ENCODE measurements at regions of chr16 and their contacts with region 1.

Region 1: GRCh38 chr16:22297114-22297878 is at the start of gene POLR3E:
- DNase-seq: peak; percentile 100
- ATAC-seq: peak; percentile 97
- total RNA-seq, gene POLR3E: 43.5 TPM

Region 2: GRCh38 chr16:22007509-22008214 is 289.6 kb before region 1 on chr16 and contains the start of gene MOSMO:
- intact Hi-C with region 1: loop called (anchors 10 kb)
- DNase-seq: peak; percentile 84
- ATAC-seq: peak; percentile 94
- total RNA-seq, gene MOSMO: 19.7 TPM

Region 3: DNA sequence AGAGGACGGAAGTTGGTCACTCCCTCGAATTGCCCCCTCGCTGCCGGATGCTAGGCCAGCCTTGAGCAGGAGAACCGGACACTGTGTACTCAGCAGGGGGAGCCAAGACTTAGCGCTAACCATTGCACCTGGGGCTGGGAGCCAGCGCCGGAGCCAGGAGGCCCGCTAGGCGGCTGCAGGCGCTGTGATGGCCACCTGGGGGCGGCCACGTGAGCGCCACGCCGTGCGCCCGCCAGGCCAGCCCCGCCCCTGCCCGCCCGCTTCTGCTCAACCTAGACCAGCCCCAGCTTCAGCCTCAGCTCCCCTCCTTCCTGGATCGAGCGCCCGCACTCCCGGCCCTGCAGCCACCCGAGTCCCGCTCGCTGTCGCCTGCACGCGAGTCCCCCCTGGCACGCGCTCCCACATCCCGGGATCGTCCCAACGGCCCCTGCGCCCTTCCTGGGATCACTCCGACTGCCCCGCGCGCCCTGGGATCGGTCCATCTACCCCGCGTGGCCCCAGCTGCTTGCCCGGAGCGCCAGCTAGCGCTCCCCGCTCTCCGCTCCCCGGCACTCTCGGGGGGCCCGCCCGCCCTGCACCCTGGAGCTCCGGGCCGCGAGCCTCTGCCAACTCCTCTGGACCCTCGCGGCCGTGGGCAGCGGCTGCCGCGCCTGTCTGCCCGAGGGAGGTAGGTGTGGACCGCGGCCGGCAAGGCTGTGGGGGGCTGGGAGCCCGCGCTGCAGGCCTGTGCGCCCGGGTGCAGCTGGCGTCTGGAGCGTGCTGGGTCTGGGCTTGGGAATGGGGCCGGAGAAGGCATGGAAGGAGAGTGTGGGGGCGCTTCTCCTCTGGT is 91.1 kb before region 1 on chr16 and contains the start of gene EEF2K:
- intact Hi-C with region 1: loop called (anchors 5 kb)
- DNase-seq: peak; percentile 92
- ATAC-seq: peak; percentile 95
- total RNA-seq, gene EEF2K: 47.0 TPM

Region 4: GRCh38 chr16:22252317-22252716 is 45.0 kb before region 1 on chr16:
- intact Hi-C with region 1: no loop called
- DNase-seq: no peak
- ATAC-seq: no peak